Activated CD4-positive, alpha-beta memory T cell treated with anti-CD3 and anti-CD28 coated beads, Interleukin-2, amount 10 ng/mL, durations not matched to agents 7 days and 5 days (primary cell): ENCODE measurements at regions of chr10 and their contacts with region 1.

Region 1: GRCh38 chr10:92592761-92593618 is at the start of gene KIF11:
- DNase-seq: peak; percentile 98
- H3K4me3 Mint-ChIP-seq: peak within 1 kb of the TSS; percentile 96
- H3K27ac Mint-ChIP-seq: peak within 1 kb of the TSS; percentile 100
- H3K4me1 Mint-ChIP-seq: peaks cover 50% of the 10 kb centered on the region
- H3K27me3 Mint-ChIP-seq: no peaks in the 10 kb centered on the region
- total RNA-seq, gene KIF11: 78.5 to 79.5 TPM

Region 2: GRCh38 chr10:92432596-92432995 is 160.4 kb before region 1 on chr10:
- CTCF ChIA-PET with region 1: no interaction called
- POLR2A ChIA-PET with region 1: no interaction called
- DNase-seq: no peak
- H3K4me3 Mint-ChIP-seq: no peak overlapping the region
- H3K27ac Mint-ChIP-seq: no peak overlapping the region
- H3K4me1 Mint-ChIP-seq: no peaks in the 10 kb centered on the region
- H3K27me3 Mint-ChIP-seq: no peaks in the 10 kb centered on the region

Region 3: DNA sequence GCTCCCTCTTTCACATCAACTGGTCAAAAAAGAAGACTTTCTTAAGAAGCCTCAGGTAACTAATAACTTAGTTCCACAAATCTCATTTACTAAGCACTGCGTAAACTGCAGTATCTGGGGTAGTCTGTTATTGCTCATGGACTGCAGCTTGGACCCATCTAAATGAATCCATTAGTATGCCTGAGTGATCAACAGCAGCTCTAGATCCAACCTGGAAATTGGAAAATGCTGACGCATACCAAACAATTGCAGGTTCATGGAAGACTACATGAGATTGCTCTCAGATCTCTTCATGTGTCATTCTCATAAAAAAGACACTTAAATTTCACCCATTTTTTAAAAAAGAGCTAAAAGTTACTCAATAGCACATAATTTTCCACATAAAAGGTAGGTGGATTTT is 140.7 kb before region 1 on chr10:
- CTCF ChIA-PET with region 1: no interaction called
- POLR2A ChIA-PET with region 1: no interaction called
- DNase-seq: no peak
- H3K4me3 Mint-ChIP-seq: no peak overlapping the region
- H3K27ac Mint-ChIP-seq: no peak overlapping the region
- H3K4me1 Mint-ChIP-seq: peaks cover 5% of the 10 kb centered on the region
- H3K27me3 Mint-ChIP-seq: no peaks in the 10 kb centered on the region

Region 4: GRCh38 chr10:92573798-92574547 is 19.0 kb before region 1 on chr10 and contains the start of gene IDE:
- CTCF ChIA-PET with region 1: interaction called, 40 read pairs
- POLR2A ChIA-PET with region 1: interaction called, 89 read pairs
- DNase-seq: peak; percentile 86
- H3K4me3 Mint-ChIP-seq: peak within 1 kb of the TSS; percentile 83
- H3K27ac Mint-ChIP-seq: peak within 1 kb of the TSS; percentile 79
- H3K4me1 Mint-ChIP-seq: peaks cover 35% of the 10 kb centered on the region
- H3K27me3 Mint-ChIP-seq: no peaks in the 10 kb centered on the region
- total RNA-seq, gene IDE: 24.6 to 27.9 TPM

Region 5: DNA sequence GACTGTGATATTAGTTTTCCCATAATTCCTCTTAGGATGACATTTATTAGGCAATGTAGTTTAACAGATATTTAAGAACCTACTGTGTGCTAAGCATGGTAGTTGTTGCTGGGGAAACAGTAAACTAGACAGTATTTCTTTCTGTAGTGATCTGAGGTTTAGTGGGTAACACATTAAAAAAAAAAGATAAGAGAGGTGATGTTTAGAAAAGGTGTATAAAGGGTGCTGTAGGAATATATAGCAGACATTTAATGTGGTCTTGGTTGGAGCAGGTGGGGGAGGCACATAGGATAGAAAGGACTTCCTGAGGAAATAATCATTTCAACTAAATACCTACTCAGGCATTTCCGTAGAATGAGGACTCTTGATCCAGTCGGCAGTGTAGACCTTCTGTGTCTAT is 11.9 kb after region 1 on chr10:
- CTCF ChIA-PET with region 1: no interaction called
- POLR2A ChIA-PET with region 1: interaction called, 19 read pairs
- DNase-seq: no peak
- H3K4me3 Mint-ChIP-seq: no peak overlapping the region
- H3K27ac Mint-ChIP-seq: peak overlapping the region; percentile 17
- H3K4me1 Mint-ChIP-seq: peaks cover 58% of the 10 kb centered on the region
- H3K27me3 Mint-ChIP-seq: no peaks in the 10 kb centered on the region